ENCODE measurements at regions of chr10 and their contacts with region 1.

Region 1: DNA sequence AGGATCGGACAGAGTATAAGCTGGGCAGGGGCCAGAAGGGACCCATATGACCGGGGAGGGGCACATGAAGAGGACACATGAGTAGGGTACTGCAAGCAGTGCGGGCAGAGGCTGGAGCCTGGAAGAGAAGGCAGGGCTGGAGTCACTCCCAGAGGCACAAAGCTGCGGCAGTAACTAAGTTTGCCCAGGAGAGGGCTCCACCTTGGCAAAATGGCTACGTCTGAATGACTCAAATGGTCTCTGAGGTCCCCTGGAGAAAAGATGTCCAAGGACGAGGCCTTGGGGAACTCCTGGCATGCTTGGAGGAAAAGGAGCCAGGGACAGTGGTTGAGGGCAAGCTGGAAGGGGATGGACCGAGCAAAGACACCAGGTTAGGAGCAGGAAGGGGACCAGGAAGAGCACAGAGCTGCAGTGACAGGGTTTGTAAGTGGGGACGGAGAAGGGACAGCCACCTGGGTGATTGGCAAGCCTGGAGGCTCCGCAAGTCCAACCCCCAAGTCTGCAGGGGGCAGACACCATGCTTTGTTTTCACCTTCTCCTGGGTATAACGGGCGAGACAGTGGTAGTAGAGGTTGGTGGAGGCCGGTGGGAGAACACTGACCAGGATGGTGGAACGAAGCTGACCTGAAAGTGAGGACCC is 43.1 kb upstream of the LBX1 start:
- DNase-seq: peak; percentile 54
- ATAC-seq: peak; percentile 99
- H3K4me3 ChIP-seq: no peak overlapping the region
- H3K27ac ChIP-seq: no peak overlapping the region
- H3K4me1 ChIP-seq: no peaks in the 10 kb centered on the region
- H3K27me3 ChIP-seq: peaks cover 41% of the 10 kb centered on the region
- CTCF ChIP-seq: peak; percentile 76
- POLR2A ChIP-seq: no peak
- RAD21 ChIP-seq: peak; percentile 61

Region 2: DNA sequence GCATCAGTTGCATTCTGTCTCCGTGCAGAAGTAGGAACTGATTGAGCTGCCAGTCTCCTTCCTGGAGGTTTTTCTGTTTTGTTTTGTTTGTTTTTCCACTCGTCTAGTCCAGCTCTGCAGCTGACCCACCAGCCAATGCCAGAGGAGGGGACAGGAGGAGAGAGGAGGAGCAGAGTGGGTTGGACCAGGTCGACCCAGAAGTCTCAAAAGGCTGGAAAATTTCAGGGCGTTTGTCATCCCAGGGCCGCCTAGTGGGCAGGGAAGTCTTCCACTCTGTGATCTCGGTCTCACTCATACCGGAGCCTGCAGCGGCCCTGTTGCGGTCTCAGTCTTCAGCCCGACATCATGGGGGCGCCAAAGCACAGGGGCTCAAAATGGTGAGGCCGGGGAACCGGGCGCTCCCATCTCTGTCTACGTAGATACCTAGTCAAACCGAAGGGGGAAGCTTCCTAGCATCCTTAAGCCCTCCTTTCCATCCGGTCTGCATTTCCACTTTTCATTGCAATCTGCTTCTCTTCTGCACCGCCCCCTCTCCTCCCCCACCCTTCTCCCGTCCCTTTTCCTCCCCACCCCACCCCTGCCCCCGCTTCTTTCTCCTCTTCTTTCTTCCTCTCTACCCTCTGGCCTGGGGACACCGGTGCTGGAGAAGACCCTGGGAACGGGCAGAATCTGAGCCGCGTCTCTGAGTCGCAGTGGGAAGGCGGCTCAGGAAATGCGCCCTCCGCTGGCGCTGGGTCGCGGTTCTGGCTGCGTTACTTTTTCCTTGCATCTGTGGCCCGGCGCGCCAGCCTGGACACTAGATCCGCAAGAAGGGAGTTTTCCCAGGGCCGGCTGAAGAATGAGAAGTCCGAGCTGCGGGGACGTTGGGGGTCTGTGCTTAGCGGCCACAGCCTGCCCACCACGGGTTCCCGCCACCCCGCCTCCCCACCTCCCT is 543.2 kb before region 1 on chr10:
- CTCF ChIA-PET with region 1: no interaction called
- POLR2A ChIA-PET with region 1: interaction called, 11 read pairs
- dilution Hi-C with region 1: no loop called
- in situ Hi-C with region 1: no loop called
- intact Hi-C with region 1: no loop called
- DNase-seq: peak; percentile 13
- ATAC-seq: peak; percentile 55
- H3K4me3 ChIP-seq: no peak overlapping the region
- H3K27ac ChIP-seq: no peak overlapping the region
- H3K4me1 ChIP-seq: no peaks in the 10 kb centered on the region; the same call in 1 of the 2 replicates
- H3K27me3 ChIP-seq: peaks cover 78% of the 10 kb centered on the region
- CTCF ChIP-seq: peak; percentile 36
- POLR2A ChIP-seq: no peak
- RAD21 ChIP-seq: peak; percentile 18; the same call in 1 of the 2 replicates

Region 3: DNA sequence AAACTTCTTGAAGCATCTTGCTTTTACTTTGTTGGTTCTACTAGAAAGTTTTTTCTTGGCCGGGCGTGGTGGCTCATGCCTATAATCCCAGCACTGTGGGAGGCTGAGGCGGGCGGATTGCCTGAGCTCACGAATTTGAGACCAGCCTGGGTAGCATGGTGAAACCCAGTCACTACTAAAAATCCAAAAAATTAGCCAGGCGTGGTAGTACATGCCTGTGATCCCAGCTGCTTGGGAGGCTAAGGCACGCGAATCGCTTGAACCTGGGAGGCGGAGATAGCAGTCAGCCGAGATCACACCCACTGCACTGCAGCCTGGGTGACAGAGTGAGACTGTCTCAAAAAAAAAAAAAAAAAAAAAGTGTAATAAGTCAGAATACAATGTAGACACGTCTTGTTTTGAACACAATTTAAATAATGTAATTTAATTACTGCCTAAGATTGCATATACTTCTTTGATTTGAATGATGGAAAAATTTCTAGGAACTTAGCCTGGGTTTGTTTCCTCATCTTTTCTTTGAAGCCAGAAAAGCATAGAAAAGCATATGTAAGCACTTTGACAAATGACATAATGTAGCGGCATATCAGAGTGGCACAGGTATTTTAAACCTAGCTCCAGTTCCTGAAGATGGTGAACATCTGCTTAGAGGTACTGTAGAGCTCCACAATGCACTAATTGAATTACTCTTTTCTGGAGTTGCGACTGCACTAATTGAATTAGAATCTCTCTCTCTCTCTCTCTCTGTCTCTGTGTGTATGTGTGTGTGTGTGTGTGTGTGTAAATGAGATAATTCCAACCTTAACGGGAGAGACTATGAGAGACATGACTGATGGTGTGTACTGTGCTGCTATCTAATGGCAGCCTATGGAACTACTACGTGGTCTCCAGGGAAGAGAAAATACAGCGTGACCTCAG is 169.4 kb after region 1 on chr10:
- CTCF ChIA-PET with region 1: no interaction called
- POLR2A ChIA-PET with region 1: no interaction called
- dilution Hi-C with region 1: no loop called
- in situ Hi-C with region 1: loop called (anchors 25 kb)
- intact Hi-C with region 1: loop called (anchors 5 kb)
- DNase-seq: peak; percentile 78
- ATAC-seq: peak; percentile 97
- H3K4me3 ChIP-seq: no peak overlapping the region
- H3K27ac ChIP-seq: no peak overlapping the region
- H3K4me1 ChIP-seq: no peaks in the 10 kb centered on the region
- H3K27me3 ChIP-seq: no peaks in the 10 kb centered on the region
- CTCF ChIP-seq: peak; percentile 69
- POLR2A ChIP-seq: no peak
- RAD21 ChIP-seq: peak; percentile 83